ENCODE measurements at regions of chr4 and their contacts with region 1.

Region 1: DNA sequence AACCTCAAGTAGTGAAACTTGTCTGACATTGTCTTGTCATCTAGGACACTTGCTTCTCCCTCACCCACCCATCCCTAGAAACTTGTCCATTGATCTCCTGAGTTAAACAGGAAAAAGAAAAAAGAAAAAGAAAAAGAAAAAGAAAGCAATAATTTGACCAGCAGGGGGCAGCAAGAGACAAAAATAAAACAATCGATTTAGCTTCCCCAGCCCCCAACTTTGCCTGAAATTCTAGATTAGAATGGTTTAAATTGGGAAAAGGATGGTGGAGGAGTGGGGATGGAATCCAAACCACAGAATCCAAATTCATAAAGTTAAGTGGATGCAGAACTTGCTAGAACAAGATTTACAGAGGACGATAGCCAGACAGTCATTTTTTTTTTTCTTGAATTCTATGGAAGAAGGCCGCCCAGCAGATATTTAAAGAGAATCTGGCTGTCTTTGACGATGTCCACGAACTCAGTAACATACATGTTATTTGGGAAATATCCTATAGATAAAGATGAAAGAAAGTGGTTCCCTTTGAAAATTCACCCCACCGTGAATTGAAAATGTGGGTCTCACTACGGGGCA is 282.9 kb downstream of the USP46 start:
- DNase-seq: peak in 1 of 5 donors; percentile 20
- ATAC-seq: no peak
- H3K4me3 ChIP-seq: no peak overlapping the region
- H3K27ac ChIP-seq: no peak overlapping the region
- H3K4me1 ChIP-seq: peaks cover 0 to 6% (median 0%) of the 10 kb centered on the region in 12 donors
- H3K27me3 ChIP-seq: no peaks in the 10 kb centered on the region
- CTCF ChIP-seq: peak; percentile 40 to 74 (median 62)
- POLR2A ChIP-seq: no peak

Region 2: DNA sequence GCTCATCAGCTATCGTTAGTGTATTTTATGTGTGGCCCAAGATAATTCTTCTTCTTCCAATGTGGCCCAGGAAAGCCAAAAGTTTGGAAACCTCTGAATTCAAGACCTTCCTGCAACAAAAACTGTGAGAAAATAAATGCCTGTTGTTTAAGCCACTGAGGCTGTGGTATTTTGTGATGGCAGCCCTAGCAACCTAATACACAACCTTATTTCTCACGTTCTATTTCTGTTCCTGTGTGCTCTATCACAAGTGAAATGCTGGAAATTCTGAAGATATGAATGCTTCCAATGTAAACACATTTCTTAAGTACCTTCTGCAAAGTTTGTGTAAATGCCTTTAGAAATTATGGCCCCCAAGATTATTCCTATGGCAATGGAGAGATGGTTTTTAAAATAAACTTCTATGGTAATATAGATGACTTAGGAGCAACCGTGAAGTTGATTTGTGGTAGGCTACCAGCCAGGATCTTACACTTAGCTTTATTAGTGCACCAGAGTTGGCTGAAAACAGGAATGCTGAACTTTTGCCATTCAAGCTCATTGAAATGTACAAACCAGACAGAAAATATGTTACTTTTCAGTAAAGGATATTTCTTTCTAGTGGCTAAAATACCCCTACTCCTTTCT is 134.8 kb after region 1 on chr4:
- intact Hi-C with region 1: loop called in 1 of 10 experiments (anchors 10 kb)
- DNase-seq: no peak
- ATAC-seq: peak in 3 of 4 donors; percentile 59 to 74 (median 73)
- H3K4me3 ChIP-seq: no peak overlapping the region
- H3K27ac ChIP-seq: peak overlapping the region in 11 of 12 donors; percentile 14 to 78 (median 53)
- H3K4me1 ChIP-seq: peaks cover 0 to 39% (median 16%) of the 10 kb centered on the region in 12 donors
- H3K27me3 ChIP-seq: no peaks in the 10 kb centered on the region
- CTCF ChIP-seq: no peak
- POLR2A ChIP-seq: no peak

Region 3: DNA sequence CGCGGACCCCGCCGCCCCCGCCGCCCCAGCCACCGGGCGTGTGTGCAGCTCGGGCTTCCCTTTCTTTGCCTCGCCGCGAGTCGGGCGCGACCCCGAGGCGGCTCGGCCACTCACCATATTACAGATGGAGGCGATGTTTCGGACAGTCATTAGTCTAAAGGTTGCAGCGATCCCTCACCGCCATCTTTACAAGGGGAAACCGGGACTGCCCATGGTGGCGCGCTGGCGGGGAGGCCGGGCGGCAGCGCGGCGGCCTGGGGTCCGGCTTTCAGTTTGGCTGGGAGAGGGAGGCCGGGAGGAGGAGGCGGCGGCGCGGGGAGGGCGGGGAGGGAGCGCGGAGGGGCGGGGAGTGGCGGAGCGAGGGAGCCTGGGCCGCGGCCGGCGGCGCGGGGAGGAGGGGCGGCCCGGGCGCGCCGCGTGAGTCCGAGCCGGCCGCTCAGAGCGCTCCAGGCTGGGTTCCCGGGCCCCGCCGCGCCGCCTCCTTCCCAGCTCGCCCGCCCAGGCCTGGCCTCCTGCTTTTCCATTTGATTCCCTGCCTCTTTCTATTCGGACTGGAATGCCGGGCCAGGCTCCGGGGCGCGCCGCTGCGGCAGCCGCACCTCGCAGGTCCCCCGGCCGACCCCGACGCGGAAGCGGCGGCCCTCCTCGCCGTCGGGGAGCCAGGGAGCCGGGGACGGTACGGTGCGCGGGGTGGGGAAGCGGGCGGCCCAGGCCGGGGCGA is 282.9 kb after region 1 on chr4 and contains the start of gene USP46:
- intact Hi-C with region 1: loop called in 3 of 10 experiments (anchors 10 kb)
- DNase-seq: peak; percentile 84 to 90 (median 87)
- ATAC-seq: peak; percentile 60 to 96 (median 89)
- H3K4me3 ChIP-seq: peak within 1 kb of the TSS; percentile 60 to 98 (median 91)
- H3K27ac ChIP-seq: peak within 1 kb of the TSS; percentile 94 to 100 (median 98)
- H3K4me1 ChIP-seq: peaks cover 0 to 67% (median 40%) of the 10 kb centered on the region in 12 donors
- H3K27me3 ChIP-seq: no peaks in the 10 kb centered on the region
- CTCF ChIP-seq: no peak
- POLR2A ChIP-seq: peak in 1 of 2 donors; percentile 46
- total RNA-seq, gene USP46: 29.8 to 111 (median 75.3) TPM

Region 4: GRCh38 chr4:52676536-52676935 is 300.3 kb after region 1 on chr4:
- intact Hi-C with region 1: no loop called
- DNase-seq: no peak
- ATAC-seq: no peak
- H3K4me3 ChIP-seq: no peak overlapping the region
- H3K27ac ChIP-seq: no peak overlapping the region
- H3K4me1 ChIP-seq: peaks cover 0 to 2% (median 0%) of the 10 kb centered on the region in 12 donors
- H3K27me3 ChIP-seq: no peaks in the 10 kb centered on the region
- CTCF ChIP-seq: no peak
- POLR2A ChIP-seq: no peak

Region 5: GRCh38 chr4:52861879-52862616 is 485.8 kb after region 1 on chr4 and contains the start of gene RASL11B:
- intact Hi-C with region 1: loop called in 1 of 10 experiments (anchors 10 kb)
- DNase-seq: peak; percentile 86 to 92 (median 91)
- ATAC-seq: peak; percentile 92 to 98 (median 98)
- H3K4me3 ChIP-seq: peak within 1 kb of the TSS; percentile 64 to 91 (median 74)
- H3K27ac ChIP-seq: peak within 1 kb of the TSS; percentile 17 to 90 (median 74)
- H3K4me1 ChIP-seq: peaks cover 0 to 48% (median 27%) of the 10 kb centered on the region in 12 donors
- H3K27me3 ChIP-seq: peaks cover 0 to 15% (median 0%) of the 10 kb centered on the region in 9 donors
- CTCF ChIP-seq: peak in 7 of 12 donors; percentile 33 to 52 (median 40)
- POLR2A ChIP-seq: peak; percentile 52 to 96
- total RNA-seq, gene RASL11B: 2.7 to 16.1 (median 5.5) TPM

Region 6: DNA sequence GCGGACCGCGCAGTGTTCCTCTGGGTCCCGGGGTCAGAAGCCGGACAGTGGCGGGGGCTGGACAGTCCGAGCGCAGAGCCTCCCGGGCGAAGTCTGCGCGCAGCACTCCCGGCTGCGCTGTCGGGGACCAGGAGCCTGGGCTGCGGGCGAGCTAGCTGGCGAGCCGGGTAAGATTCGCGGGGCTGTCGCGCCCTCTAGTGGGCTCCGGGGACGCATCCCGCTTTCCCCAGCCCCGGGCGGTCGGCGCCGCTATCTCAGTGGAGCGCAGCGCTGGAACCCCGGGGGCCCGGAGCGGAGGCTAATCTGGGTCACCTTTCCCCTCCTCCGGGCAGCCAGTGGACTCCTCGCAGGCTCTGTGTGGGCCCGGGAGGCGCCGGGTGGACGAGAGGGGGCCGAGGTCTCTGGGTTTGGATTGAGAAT is 1857.1 kb after region 1 on chr4:
- intact Hi-C with region 1: loop called in 3 of 10 experiments (anchors 5 to 10 kb)
- DNase-seq: peak; percentile 85 to 92 (median 89)
- ATAC-seq: peak; percentile 64 to 88 (median 85)
- H3K4me3 ChIP-seq: peak overlapping the region; percentile 22 to 80 (median 58)
- H3K27ac ChIP-seq: peak overlapping the region in 11 of 12 donors; percentile 19 to 89 (median 68)
- H3K4me1 ChIP-seq: peaks cover 6 to 51% (median 40%) of the 10 kb centered on the region in 12 donors
- H3K27me3 ChIP-seq: peaks cover 26 to 51% (median 43%) of the 10 kb centered on the region in 9 donors
- CTCF ChIP-seq: peak; percentile 67 to 89 (median 80)
- POLR2A ChIP-seq: no peak